GM18951 (cell line): ENCODE measurements at regions of chr16 and their contacts with region 1.

Region 1: GRCh38 chr16:75789237-75789636 is 62.9 kb upstream of the CPHXL start:
- POLR2A ChIP-seq: no peak

Region 2: GRCh38 chr16:75385507-75386152 is 403.6 kb before region 1 on chr16:
- in situ Hi-C with region 1: no loop called
- POLR2A ChIP-seq: no peak

Region 3: GRCh38 chr16:76653390-76654026 is 864.3 kb after region 1 on chr16:
- in situ Hi-C with region 1: loop called (anchors 25 kb)
- POLR2A ChIP-seq: no peak

Region 4: DNA sequence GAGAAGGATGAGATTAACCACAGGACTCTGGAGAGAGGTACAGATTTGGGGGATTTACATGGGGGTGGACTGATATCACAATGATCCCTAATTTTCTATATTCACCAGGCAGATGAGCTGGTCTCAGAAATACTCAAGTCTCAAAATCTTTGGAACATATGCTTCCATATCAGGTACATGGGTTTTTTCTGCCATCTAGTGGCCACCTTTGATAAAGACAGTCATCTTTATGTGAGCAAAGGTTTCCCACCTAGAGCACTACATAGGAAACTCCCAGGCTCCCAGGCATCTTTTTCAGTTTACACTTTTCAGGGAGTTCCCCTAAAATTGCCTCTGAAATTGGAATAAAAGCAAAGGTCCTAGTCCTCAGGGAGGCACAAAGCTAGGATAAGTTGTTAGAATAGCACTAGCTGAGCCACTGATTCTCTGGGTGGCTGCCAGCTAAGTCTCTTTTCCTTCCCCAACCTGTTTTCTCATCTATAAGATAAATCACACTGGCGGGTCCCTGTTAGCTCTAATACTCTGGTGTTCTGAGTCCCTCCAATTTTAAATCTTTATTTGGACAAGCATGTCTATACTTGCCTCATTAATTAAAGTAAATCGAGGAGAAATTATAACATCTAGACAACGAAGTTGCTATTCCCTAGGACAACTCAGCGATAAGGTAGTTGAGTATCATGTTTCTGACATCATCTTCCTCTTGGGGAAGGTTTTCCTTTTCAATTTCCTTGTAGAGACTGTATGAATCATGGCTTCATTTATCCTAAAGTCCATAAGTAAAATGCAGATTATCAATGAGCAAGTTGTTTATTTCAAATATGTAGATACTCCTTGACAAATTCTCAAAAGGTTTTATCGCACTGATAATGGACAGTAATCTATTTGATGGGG is 1382.8 kb after region 1 on chr16:
- in situ Hi-C with region 1: loop called (anchors 10 kb)
- POLR2A ChIP-seq: no peak